Calu3 (cell line): ENCODE measurements at regions of chr2 and their contacts with region 1.

Region 1: GRCh38 chr2:54579684-54580620 is 123.8 kb downstream of the SPTBN1 start:
- DNase-seq: peak; percentile 60
- H3K4me3 Mint-ChIP-seq: peak overlapping the region; percentile 84
- H3K27ac Mint-ChIP-seq: peak overlapping the region; percentile 98
- H3K4me1 Mint-ChIP-seq: peaks cover 90% of the 10 kb centered on the region
- H3K27me3 Mint-ChIP-seq: no peaks in the 10 kb centered on the region
- CTCF ChIP-seq: no peak

Region 2: GRCh38 chr2:54599914-54600313 is 20.0 kb after region 1 on chr2:
- CTCF ChIA-PET with region 1: interaction called, 5 read pairs
- intact Hi-C with region 1: loop called (anchors 2 kb)
- DNase-seq: peak; percentile 78
- H3K4me3 Mint-ChIP-seq: peak overlapping the region; percentile 55
- H3K27ac Mint-ChIP-seq: peak overlapping the region; percentile 76
- H3K4me1 Mint-ChIP-seq: peaks cover 95% of the 10 kb centered on the region
- H3K27me3 Mint-ChIP-seq: no peaks in the 10 kb centered on the region
- CTCF ChIP-seq: no peak

Region 3: DNA sequence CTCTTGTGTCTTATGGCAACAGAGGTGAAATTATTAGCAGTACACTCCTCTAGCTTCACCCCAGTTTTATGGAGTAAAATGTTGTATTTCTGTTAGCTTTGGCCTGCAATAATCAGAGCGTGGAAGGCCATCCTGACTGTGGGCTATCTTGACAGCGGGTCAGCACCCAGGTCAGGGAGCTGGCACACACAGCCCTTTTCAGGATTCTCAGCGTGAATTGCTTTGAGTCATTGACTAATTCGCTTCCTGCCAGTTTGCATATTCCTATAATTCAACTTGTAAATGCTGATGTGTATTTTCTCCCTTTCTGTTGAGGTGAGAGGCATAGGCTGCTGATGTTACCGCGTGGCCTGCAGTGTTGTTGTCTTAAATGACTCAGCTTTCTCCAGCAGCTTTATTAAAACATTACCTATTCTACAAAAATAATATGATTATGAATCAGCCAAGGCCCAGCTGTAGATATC is 33.9 kb after region 1 on chr2:
- CTCF ChIA-PET with region 1: no interaction called
- intact Hi-C with region 1: loop called (anchors 5 kb)
- DNase-seq: peak; percentile 36
- H3K4me3 Mint-ChIP-seq: peak overlapping the region; percentile 20
- H3K27ac Mint-ChIP-seq: peak overlapping the region; percentile 66
- H3K4me1 Mint-ChIP-seq: peaks cover 88% of the 10 kb centered on the region
- H3K27me3 Mint-ChIP-seq: no peaks in the 10 kb centered on the region
- CTCF ChIP-seq: no peak